ENCODE measurements at regions of chr5 and their contacts with region 1.

Region 1: DNA sequence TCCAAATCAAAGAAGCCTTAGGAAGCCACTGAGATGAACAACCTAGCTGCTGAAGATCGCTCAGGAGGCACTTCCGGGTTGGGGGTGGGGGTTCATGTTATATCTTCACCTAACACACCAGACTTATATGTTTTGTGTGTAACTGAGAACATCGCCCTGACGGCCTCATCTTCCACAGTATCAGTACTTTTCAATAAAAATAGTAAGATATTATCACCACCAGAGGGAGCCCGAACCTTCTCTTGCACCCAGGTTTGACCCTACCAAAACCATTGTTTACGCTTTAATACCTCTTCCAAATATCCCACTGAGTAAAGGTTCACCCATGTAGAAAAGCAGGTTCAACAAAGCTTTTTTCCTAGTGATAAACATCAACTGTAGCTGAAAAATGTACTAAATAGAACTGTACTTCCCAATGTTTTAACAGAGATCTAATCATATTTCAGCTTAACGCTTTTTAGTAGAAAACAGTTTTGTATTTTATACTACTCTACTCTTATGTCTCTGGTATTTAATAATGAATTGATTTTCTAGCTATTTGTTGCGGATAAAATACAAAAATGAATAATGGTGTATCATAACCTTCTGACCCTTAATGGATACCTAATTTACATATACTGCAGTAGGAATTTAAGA is 244.0 kb downstream of the EPB41L4A start:
- DNase-seq: no peak
- H3K4me3 ChIP-seq: no peak overlapping the region
- H3K27ac ChIP-seq: no peak overlapping the region
- H3K27me3 ChIP-seq: no peaks in the 10 kb centered on the region
- CTCF ChIP-seq: peak; percentile 68

Region 2: DNA sequence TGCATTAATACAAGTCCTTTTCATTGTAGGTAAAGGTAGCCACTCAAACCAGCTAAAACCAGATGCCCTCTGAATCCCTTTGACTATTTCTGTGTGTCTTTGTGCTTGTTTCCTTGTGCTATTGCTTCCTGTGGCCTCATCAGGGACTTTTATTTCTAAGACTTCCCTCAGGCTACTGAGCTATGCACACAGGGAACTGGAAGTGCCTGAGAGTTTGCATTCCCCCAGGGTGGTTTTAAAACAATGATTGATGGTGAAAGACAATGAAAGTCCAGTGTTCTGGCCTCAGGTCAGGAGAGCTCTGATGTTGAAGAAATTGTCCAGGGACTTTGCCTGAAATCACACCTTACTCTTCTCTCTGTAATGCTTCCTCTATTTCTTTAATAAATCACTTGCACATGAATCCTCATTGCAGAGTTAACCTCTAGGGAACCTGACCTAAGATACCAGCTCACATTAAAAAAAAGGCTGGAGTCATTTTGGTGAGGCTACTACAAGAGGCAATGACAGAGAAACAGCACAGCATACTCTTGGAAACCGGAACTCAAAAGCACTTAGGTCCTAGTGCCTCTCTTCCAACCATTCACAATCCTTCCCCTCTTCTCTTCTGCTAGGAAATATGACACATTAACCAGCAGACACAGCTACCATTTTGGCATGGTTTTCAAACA is 260.0 kb before region 1 on chr5:
- CTCF ChIA-PET with region 1: no interaction called
- POLR2A ChIA-PET with region 1: no interaction called
- DNase-seq: no peak
- H3K4me3 ChIP-seq: no peak overlapping the region
- H3K27ac ChIP-seq: no peak overlapping the region
- H3K27me3 ChIP-seq: no peaks in the 10 kb centered on the region
- CTCF ChIP-seq: no peak

Region 3: GRCh38 chr5:112146323-112147226 is 28.5 kb before region 1 on chr5:
- CTCF ChIA-PET with region 1: no interaction called
- POLR2A ChIA-PET with region 1: no interaction called
- DNase-seq: peak; percentile 64
- H3K4me3 ChIP-seq: no peak overlapping the region
- H3K27ac ChIP-seq: peak overlapping the region; percentile 57
- H3K27me3 ChIP-seq: no peaks in the 10 kb centered on the region
- CTCF ChIP-seq: peak; percentile 76

Region 4: DNA sequence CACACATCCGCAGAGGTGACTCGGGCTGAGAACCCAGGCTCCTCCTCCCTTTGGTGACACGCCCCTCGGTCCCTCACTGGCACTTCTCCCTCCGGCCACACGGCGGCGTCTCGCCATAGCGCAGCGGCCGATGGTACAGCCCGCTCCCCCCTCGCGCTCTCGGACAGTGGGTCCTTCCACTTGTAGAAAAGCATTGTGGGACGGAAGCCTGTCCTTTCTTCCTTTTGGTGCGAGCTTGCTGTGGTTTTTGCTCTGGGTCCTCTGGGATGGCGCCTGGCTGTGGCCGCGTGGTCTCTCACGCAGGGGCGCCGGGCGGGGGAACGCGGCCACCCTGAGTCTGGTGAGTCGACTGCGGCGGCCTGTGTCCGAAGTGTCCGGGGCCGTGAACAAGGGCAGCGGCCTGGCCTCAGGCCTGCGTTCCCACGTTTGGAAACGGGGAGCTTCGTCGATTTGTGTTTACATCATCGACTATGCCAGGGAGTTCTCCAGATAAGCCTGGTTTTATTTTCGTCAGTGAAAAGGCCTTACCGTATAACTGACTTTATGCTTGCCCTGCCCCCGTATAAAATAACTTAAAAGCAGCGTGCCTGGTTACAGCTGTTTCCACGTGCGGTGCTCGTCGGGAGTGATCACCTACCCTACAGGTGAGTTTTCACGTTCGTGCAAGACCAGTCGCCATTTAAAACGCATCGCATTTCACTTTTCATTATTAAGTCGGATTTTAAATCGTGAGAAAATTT is 14.3 kb before region 1 on chr5:
- CTCF ChIA-PET with region 1: interaction called, 30 read pairs
- POLR2A ChIA-PET with region 1: no interaction called
- DNase-seq: peak; percentile 87
- H3K4me3 ChIP-seq: peak overlapping the region; percentile 97
- H3K27ac ChIP-seq: peak overlapping the region; percentile 83
- H3K27me3 ChIP-seq: no peaks in the 10 kb centered on the region
- CTCF ChIP-seq: peak; percentile 99

Region 5: GRCh38 chr5:112186401-112186990 is 11.4 kb after region 1 on chr5:
- CTCF ChIA-PET with region 1: interaction called, 21 read pairs
- POLR2A ChIA-PET with region 1: no interaction called
- DNase-seq: peak; percentile 10
- H3K4me3 ChIP-seq: no peak overlapping the region
- H3K27ac ChIP-seq: no peak overlapping the region
- H3K27me3 ChIP-seq: peaks cover 6% of the 10 kb centered on the region
- CTCF ChIP-seq: peak; percentile 68

Region 6: DNA sequence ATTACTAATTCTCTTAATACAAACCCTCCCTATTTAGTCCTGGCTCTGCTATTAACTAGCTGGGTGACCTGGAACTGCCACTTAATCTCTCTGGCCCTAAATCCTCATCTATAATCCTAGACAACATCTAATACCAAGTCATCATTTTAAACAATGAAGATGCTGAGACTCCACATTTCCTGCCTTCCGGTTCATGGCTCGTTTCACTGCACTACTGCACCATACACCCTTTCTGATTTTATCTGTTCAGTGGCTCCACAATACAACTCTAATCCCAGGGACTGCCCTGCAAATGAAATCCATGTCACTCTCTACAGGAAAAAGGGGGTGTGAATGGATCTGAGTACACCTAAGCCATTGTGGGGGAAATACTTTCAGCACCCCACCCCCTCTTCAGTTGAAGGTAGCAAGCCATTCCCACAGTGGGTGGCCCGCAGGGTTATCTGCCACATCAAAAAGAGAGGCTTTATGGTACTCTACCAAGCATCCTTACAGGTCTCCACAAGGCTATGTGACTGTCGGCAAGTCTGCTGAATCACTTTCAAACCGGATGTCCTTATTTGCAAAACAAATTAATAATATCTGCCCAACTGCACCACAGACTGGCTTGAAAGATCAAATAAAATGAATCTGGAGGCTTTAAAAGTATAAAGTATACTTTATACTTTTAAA is 154.5 kb after region 1 on chr5:
- CTCF ChIA-PET with region 1: no interaction called
- POLR2A ChIA-PET with region 1: no interaction called
- DNase-seq: no peak
- H3K4me3 ChIP-seq: no peak overlapping the region
- H3K27ac ChIP-seq: no peak overlapping the region
- H3K27me3 ChIP-seq: no peaks in the 10 kb centered on the region
- CTCF ChIP-seq: no peak

Region 7: GRCh38 chr5:112419986-112420864 is 245.1 kb after region 1 on chr5:
- CTCF ChIA-PET with region 1: interaction called, 24 read pairs
- POLR2A ChIA-PET with region 1: no interaction called
- DNase-seq: no peak
- H3K4me3 ChIP-seq: peak overlapping the region; percentile 53
- H3K27ac ChIP-seq: no peak overlapping the region
- H3K27me3 ChIP-seq: peaks cover 30% of the 10 kb centered on the region
- CTCF ChIP-seq: peak; percentile 63

Region 8: DNA sequence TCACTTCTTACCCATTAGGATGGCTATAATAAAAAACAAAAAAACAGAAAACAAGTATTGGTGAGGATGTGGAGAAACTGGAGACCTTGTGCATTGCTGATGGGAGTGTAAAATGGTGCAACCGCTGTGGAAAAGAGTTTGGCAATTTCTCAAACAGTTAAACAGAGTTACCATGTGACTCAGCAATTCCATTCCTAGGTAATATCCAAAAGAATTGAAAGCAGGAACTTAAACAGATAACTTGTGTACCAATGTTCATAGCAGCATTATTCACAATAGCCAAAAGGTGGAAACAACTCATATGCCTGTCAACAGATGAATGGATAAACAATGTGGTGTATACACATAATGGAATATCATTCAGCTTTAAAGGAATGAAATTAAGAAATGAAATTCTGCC is 830.4 kb after region 1 on chr5:
- CTCF ChIA-PET with region 1: no interaction called
- POLR2A ChIA-PET with region 1: no interaction called
- DNase-seq: no peak
- H3K4me3 ChIP-seq: no peak overlapping the region
- H3K27ac ChIP-seq: no peak overlapping the region
- H3K27me3 ChIP-seq: no peaks in the 10 kb centered on the region
- CTCF ChIP-seq: no peak

Region 9: DNA sequence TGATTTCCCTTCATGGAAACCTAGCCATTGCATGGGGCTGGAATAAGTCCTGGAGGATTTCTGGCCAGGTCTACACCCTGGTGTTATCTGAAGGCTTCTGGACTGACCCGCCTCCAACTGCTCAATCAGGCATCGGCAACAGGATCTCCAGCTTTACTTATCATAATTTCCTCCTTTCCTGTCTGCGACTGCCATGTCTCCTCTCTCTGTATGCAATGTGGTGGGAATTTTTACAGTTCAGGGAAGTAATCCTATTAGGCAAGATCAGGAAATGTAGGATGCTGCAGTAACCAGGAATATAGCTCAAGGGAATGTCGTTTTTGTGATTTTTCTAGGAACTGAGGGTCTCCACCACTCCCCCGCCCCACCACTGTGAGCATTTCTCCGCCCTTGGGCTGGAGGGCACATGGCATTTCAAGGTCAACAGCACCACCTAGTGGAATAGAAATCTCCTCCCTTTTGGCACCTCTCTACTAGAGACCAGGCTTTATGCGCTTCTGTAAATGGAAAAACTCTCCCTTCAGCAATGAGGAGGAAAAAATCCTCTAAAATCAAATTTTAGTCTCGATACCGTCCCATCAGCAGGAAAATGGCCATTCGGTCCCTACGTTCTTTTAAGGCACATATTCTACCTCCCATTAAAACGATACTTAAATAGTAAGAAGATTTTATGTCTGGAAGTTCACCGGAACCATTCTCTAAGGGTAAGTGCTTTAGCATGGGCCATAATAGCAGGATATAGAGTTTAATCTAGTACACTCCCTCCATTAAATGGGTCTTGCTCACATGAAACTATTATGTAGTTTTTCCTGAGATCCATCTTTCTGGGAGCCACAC is 1431.4 kb after region 1 on chr5:
- CTCF ChIA-PET with region 1: interaction called, 23 read pairs
- POLR2A ChIA-PET with region 1: no interaction called
- DNase-seq: peak; percentile 18
- H3K4me3 ChIP-seq: no peak overlapping the region
- H3K27ac ChIP-seq: no peak overlapping the region
- H3K27me3 ChIP-seq: no peaks in the 10 kb centered on the region
- CTCF ChIP-seq: peak; percentile 82

Measured in AG04450 (cell line).